Activated B cell treated with CpG ODN at 0.5 μM for 24 hours (primary cell): ENCODE measurements at regions of chr12 and their contacts with region 1.

Region 1: GRCh38 chr12:98572010-98572409 is 21.5 kb upstream of the SLC25A3 start:
- DNase-seq: no peak
- ATAC-seq: no peak
- H3K4me3 Mint-ChIP-seq: no peak overlapping the region
- H3K27ac Mint-ChIP-seq: no peak overlapping the region
- H3K4me1 Mint-ChIP-seq: no peaks in the 10 kb centered on the region
- H3K27me3 Mint-ChIP-seq: no peaks in the 10 kb centered on the region
- CTCF ChIP-seq: no peak

Region 2: GRCh38 chr12:98653866-98654493 is 82.0 kb after region 1 on chr12:
- CTCF ChIA-PET with region 1: interaction called, 101 read pairs
- POLR2A ChIA-PET with region 1: no interaction called
- intact Hi-C with region 1: loop called (anchors 1 kb)
- DNase-seq: no peak
- ATAC-seq: peak; percentile 56
- H3K4me3 Mint-ChIP-seq: no peak overlapping the region
- H3K27ac Mint-ChIP-seq: no peak overlapping the region
- H3K4me1 Mint-ChIP-seq: no peaks in the 10 kb centered on the region
- H3K27me3 Mint-ChIP-seq: no peaks in the 10 kb centered on the region
- CTCF ChIP-seq: peak; percentile 21

Region 3: GRCh38 chr12:98743347-98743953 is 171.4 kb after region 1 on chr12:
- CTCF ChIA-PET with region 1: no interaction called
- POLR2A ChIA-PET with region 1: no interaction called
- intact Hi-C with region 1: loop called (anchors 5 kb)
- DNase-seq: no peak
- ATAC-seq: no peak
- H3K4me3 Mint-ChIP-seq: no peak overlapping the region
- H3K27ac Mint-ChIP-seq: no peak overlapping the region
- H3K4me1 Mint-ChIP-seq: peaks cover 7% of the 10 kb centered on the region
- H3K27me3 Mint-ChIP-seq: peaks cover 26% of the 10 kb centered on the region
- CTCF ChIP-seq: no peak

Region 4: GRCh38 chr12:98998697-98999299 is 426.8 kb after region 1 on chr12:
- CTCF ChIA-PET with region 1: interaction called, 5 read pairs
- POLR2A ChIA-PET with region 1: no interaction called
- intact Hi-C with region 1: loop called (anchors 2 kb)
- DNase-seq: no peak
- ATAC-seq: no peak
- H3K4me3 Mint-ChIP-seq: no peak overlapping the region
- H3K27ac Mint-ChIP-seq: no peak overlapping the region
- H3K4me1 Mint-ChIP-seq: no peaks in the 10 kb centered on the region
- H3K27me3 Mint-ChIP-seq: no peaks in the 10 kb centered on the region
- CTCF ChIP-seq: no peak